PC-3 (cell line): ENCODE measurements at regions of chr4 and their contacts with region 1.

Region 1: GRCh38 chr4:164027805-164028204 is 533.3 kb downstream of the TMA16 start:
- DNase-seq: no peak
- ATAC-seq: no peak
- H3K4me3 ChIP-seq: no peak overlapping the region
- H3K27ac ChIP-seq: no peak overlapping the region
- H3K4me1 ChIP-seq: no peaks in the 10 kb centered on the region
- H3K27me3 ChIP-seq: no peaks in the 10 kb centered on the region
- CTCF ChIP-seq: no peak

Region 2: GRCh38 chr4:163810757-163811156 is 217.0 kb before region 1 on chr4:
- CTCF ChIA-PET with region 1: no interaction called
- POLR2A ChIA-PET with region 1: no interaction called
- intact Hi-C with region 1: no loop called
- DNase-seq: peak; percentile 67
- ATAC-seq: peak; percentile 91
- H3K4me3 ChIP-seq: peak overlapping the region; percentile 47
- H3K27ac ChIP-seq: peak overlapping the region; percentile 69
- H3K4me1 ChIP-seq: peaks cover 10% of the 10 kb centered on the region
- H3K27me3 ChIP-seq: no peaks in the 10 kb centered on the region
- CTCF ChIP-seq: no peak

Region 3: GRCh38 chr4:164204434-164204833 is 176.6 kb after region 1 on chr4:
- CTCF ChIA-PET with region 1: no interaction called
- POLR2A ChIA-PET with region 1: no interaction called
- intact Hi-C with region 1: loop called (anchors 1 kb)
- DNase-seq: peak; percentile 92
- ATAC-seq: peak; percentile 96
- H3K4me3 ChIP-seq: no peak overlapping the region
- H3K27ac ChIP-seq: peak overlapping the region; percentile 74
- H3K4me1 ChIP-seq: peaks cover 20% of the 10 kb centered on the region
- H3K27me3 ChIP-seq: no peaks in the 10 kb centered on the region
- CTCF ChIP-seq: no peak